ENCODE measurements at regions of chr15 and their contacts with region 1.

Region 1: GRCh38 chr15:40906091-40906990 is 12.1 kb downstream of the VPS18 start:
- DNase-seq: peak; percentile 90 to 94 (median 94)
- ATAC-seq: peak; percentile 71 to 87 (median 75)
- H3K4me3 ChIP-seq: peak overlapping the region; percentile 31 to 38 (median 32)
- H3K27ac ChIP-seq: peak overlapping the region; percentile 71 to 98 (median 95)
- H3K4me1 ChIP-seq: peaks cover 0 to 69% (median 28%) of the 10 kb centered on the region in 4 donors
- H3K27me3 ChIP-seq: no peaks in the 10 kb centered on the region
- CTCF ChIP-seq: peak; percentile 88 to 96 (median 92)
- POLR2A ChIP-seq: peak; percentile 61

Region 2: DNA sequence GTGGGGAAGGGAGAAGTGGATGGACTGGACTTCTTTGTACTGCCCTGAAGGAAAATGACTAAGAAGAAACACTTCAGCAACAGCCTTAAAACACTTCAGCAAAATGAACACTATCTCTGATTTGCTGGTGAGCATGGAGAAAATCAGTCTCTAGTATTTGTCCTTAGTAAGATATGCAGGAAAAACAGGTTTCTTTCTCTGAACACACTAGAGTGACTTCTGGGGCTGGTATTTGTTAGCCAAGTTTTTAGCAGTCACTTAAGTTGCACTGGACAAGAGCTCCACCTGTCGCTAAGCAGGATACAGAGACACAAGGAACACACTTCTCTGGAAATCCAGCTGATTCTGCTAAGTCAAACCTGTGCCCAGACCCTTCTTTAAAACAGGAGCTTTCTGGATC is 112.2 kb after region 1 on chr15:
- intact Hi-C with region 1: loop called in 1 of 2 experiments (anchors 10 kb)
- DNase-seq: no peak
- ATAC-seq: peak; percentile 39 to 70 (median 58)
- H3K4me3 ChIP-seq: no peak overlapping the region
- H3K27ac ChIP-seq: peak overlapping the region in 1 of 3 donors; percentile 18
- H3K4me1 ChIP-seq: peaks cover 0 to 16% (median 2%) of the 10 kb centered on the region in 4 donors
- H3K27me3 ChIP-seq: no peaks in the 10 kb centered on the region
- CTCF ChIP-seq: peak; percentile 17 to 30 (median 25)
- POLR2A ChIP-seq: no peak

Region 3: DNA sequence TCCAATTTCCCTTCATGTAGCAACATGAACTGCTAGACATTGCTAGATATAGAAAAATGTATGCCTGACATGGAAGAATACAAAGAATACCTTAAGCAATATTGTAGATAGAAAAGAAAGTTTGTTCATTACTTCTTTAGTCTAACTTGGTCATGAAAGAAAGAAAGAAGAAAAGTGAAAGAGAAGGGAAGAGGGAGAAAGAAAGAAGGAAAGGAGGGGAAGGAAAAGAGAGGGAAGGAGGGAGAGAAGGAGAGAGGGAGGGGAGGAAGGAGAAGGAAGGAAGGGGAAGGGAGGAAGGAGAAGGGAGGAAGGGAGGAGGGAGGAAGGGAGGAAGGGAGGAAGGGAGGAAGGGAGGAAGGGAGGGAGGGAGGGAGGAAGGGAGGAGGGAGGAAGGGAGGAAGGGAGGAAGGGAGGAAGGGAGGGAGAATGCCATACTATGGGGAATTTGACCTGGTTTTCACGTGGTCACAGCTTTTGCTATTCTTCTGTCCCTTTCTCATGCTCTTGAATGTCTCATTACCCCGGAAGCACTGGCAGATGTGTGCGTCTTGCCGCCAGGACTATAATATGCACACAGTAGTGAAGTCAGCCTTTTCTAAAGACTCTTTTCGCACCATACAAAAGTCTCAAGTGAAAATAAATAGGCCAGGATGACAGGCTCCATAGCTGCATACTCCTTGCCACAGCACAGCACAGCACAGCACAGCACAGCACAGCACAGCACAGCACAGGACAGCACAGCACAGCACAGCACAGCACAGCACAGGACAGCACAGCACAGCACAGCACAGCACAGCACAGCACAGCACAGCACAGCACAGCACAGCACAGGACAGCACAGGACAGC is 125.1 kb after region 1 on chr15:
- intact Hi-C with region 1: loop called in 1 of 2 experiments (anchors 10 kb)
- DNase-seq: no peak
- ATAC-seq: no peak
- H3K4me3 ChIP-seq: no peak overlapping the region
- H3K27ac ChIP-seq: no peak overlapping the region
- H3K4me1 ChIP-seq: no peaks in the 10 kb centered on the region
- H3K27me3 ChIP-seq: no peaks in the 10 kb centered on the region
- CTCF ChIP-seq: no peak
- POLR2A ChIP-seq: no peak

Region 4: DNA sequence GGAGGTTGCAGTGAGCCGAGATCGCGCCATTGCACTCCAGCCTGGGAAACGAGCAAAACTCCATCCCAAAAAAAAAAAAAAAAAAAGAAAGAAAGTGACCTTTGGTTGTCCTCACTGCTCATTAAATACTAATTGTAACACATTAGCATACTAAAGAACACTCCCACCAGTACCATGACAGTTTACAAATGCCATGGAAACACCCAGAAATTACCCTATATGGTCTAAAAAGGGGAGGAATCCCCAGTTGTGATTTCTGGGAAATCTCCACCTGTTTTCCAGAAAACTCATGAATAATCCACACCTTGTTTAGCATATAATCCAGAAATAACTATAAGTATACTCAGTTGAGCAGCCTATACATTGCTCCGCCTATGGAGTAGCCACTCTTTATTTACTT is 233.3 kb after region 1 on chr15:
- intact Hi-C with region 1: no loop called
- DNase-seq: no peak
- ATAC-seq: no peak
- H3K4me3 ChIP-seq: no peak overlapping the region
- H3K27ac ChIP-seq: no peak overlapping the region
- H3K4me1 ChIP-seq: peaks cover 0 to 27% (median 0%) of the 10 kb centered on the region in 4 donors
- H3K27me3 ChIP-seq: no peaks in the 10 kb centered on the region
- CTCF ChIP-seq: no peak
- POLR2A ChIP-seq: no peak

Region 5: DNA sequence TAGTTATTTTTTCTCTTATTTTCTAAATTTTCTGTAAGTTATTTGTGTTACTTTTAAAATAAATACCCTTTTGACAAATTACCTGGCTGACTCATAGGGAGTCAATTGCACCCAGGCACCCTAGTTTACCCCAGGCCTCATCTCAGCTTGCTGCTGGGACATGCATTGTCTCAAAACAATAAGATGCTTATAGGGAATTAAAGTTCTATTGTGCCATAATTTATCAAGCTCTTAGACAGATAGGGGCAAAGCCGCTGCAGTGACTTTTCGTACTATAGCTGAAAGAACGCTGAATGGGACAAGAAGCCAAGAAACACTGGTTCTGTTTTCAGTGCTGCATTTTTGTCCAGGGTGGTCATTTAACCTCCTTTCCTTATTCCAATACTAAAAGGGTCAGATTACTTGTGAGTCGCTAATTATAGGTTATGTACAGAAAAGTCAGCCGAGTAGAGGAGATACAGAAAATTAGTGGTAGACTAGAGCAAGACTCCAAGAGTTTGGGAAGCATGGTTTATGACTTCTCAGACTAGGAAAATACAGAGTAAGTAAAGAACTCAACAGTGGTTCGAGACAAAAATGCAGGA is 274.0 kb after region 1 on chr15:
- intact Hi-C with region 1: loop called (anchors 10 kb)
- DNase-seq: no peak
- ATAC-seq: no peak
- H3K4me3 ChIP-seq: no peak overlapping the region
- H3K27ac ChIP-seq: no peak overlapping the region
- H3K4me1 ChIP-seq: no peaks in the 10 kb centered on the region
- H3K27me3 ChIP-seq: no peaks in the 10 kb centered on the region
- CTCF ChIP-seq: no peak
- POLR2A ChIP-seq: no peak

Measured in right lobe of liver (tissue), 6 donors.